ENCODE measurements at regions of chr2 and their contacts with region 1.

Region 1: DNA sequence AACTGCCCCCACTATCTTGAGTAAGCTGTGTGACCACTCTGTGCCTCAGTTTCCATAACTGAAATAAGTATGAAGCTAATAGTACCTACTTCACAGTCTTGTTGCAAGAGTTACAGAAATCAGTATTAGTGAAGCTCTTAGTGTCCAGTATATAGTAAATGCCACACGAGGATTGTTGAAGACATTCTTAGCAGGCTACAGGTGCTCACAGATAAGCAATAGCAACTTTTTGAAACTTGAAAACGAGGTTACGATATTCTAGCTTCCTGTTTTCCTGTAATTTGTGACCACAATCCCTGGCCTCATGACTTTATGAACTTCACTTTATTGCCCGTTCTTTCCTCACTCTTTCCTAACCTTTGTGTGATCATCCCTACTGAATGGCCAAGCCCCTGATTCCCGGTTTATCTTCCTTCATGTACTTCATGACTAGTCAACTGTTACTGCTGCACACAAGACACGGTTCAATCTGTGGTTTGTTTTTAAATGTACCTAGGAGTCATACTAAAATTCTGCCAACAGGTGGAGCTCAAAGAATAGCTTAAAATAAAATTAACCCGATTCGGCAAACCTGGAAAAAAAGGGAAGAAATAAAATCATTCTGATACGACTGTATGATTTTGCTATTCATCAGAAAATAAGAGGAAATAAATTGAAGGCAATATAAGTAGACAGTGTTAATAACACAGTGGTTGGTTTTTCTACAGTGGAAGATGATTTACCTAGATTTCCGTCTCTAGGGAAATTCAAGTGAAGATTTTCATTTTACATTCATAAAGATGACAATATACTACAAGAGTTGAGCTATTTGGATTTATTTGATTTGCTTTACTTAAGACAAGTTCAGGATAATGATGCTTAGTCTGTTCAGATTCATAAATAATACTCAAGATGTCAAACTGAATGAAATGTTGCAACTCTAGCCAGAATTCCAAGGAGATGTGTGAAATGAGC is 38.1 kb upstream of the STAT1 start:
- DNase-seq: no peak
- H3K4me3 Mint-ChIP-seq: no peak overlapping the region
- H3K27ac Mint-ChIP-seq: no peak overlapping the region
- H3K4me1 Mint-ChIP-seq: peaks cover 28% of the 10 kb centered on the region
- H3K27me3 Mint-ChIP-seq: no peaks in the 10 kb centered on the region

Region 2: GRCh38 chr2:190940454-190940853 is 111.6 kb before region 1 on chr2:
- CTCF ChIA-PET with region 1: no interaction called
- POLR2A ChIA-PET with region 1: no interaction called
- DNase-seq: no peak
- H3K4me3 Mint-ChIP-seq: no peak overlapping the region
- H3K27ac Mint-ChIP-seq: no peak overlapping the region
- H3K4me1 Mint-ChIP-seq: no peaks in the 10 kb centered on the region
- H3K27me3 Mint-ChIP-seq: no peaks in the 10 kb centered on the region

Region 3: DNA sequence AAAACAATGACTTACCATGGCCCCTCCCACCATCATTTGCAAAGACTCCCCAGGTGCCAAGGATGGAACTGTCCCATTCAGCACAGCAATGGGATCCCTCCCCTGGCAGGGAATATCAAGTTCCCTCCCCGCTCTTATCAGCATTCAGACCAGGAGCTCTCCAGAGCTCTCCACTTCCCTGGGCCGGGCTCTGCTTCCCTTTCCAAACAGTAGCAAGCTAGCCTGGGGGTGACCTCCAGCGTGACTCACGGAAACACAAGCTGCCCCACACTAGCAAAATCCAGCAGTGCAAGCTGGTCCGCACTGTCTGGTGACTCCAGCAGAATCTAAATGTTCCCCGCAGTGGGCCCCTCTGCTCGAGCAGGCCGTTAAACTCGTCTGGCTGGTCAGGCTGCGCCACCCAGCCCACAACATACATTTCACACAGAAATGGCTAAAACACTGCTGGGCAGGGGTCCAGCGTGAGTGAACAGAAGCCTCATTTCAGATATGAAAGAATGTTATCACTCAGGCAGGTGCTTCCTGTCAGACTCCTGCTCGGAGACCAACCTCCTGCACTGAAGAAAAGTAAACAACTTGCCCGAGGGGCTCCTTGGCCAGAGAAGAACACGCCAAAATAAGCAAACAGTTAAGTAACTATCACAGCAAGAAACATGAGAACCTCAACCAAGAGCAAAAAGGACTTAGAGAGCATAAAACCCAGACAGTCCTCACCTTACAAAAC is 72.0 kb before region 1 on chr2:
- CTCF ChIA-PET with region 1: no interaction called
- POLR2A ChIA-PET with region 1: no interaction called
- DNase-seq: no peak
- H3K4me3 Mint-ChIP-seq: no peak overlapping the region
- H3K27ac Mint-ChIP-seq: no peak overlapping the region
- H3K4me1 Mint-ChIP-seq: peaks cover 62% of the 10 kb centered on the region
- H3K27me3 Mint-ChIP-seq: no peaks in the 10 kb centered on the region

Region 4: DNA sequence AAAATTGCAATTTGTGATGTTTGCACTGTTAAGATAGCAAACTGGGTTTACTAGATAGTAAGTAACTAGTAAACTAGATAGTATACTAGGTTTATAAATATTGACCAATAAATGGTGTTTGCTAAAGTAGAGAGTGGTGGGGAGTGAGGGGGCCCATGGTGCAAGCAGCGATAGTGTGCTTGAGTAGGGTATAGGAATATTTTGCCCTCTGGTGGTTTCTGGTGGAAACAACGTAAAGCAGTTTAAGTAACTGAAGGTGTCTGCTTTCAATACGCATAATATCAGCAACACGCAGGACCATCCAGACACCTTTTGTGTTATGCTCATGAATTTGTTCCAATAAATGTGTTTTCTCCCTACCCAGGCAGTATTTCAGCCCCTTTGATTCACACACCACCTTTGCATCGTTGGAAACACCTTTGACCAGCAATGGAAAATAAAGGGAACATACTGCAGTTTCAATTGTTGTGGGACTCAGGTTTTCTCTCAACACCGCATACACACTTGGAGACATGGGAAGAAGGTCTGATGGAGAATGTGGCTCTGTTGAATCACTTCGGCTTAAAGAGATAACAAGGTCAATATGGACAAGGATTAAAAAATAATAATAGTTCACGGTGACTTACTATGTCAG is 21.5 kb before region 1 on chr2:
- CTCF ChIA-PET with region 1: interaction called, 101 read pairs
- POLR2A ChIA-PET with region 1: interaction called, 78 read pairs
- DNase-seq: peak; percentile 36
- H3K4me3 Mint-ChIP-seq: peak overlapping the region; percentile 7
- H3K27ac Mint-ChIP-seq: peak overlapping the region; percentile 69
- H3K4me1 Mint-ChIP-seq: peaks cover 59% of the 10 kb centered on the region
- H3K27me3 Mint-ChIP-seq: no peaks in the 10 kb centered on the region

Region 5: GRCh38 chr2:191038241-191038725 is 13.8 kb before region 1 on chr2:
- CTCF ChIA-PET with region 1: interaction called, 101 read pairs
- POLR2A ChIA-PET with region 1: interaction called, 78 read pairs
- DNase-seq: peak; percentile 69
- H3K4me3 Mint-ChIP-seq: peak overlapping the region; percentile 29
- H3K27ac Mint-ChIP-seq: peak overlapping the region; percentile 88
- H3K4me1 Mint-ChIP-seq: peaks cover 49% of the 10 kb centered on the region
- H3K27me3 Mint-ChIP-seq: no peaks in the 10 kb centered on the region

Region 6: GRCh38 chr2:191083540-191083939 is 31.4 kb after region 1 on chr2:
- CTCF ChIA-PET with region 1: no interaction called
- POLR2A ChIA-PET with region 1: no interaction called
- DNase-seq: no peak
- H3K4me3 Mint-ChIP-seq: no peak overlapping the region
- H3K27ac Mint-ChIP-seq: no peak overlapping the region
- H3K4me1 Mint-ChIP-seq: peaks cover 24% of the 10 kb centered on the region
- H3K27me3 Mint-ChIP-seq: no peaks in the 10 kb centered on the region

Measured in activated CD4-positive, alpha-beta memory T cell treated with anti-CD3 and anti-CD28 coated beads, Interleukin-2, amount 10 ng/mL, durations not matched to agents 7 days and 5 days (primary cell).